Activated B cell treated with CpG ODN at 0.5 μM for 24 hours (primary cell): ENCODE measurements at regions of chr1 and their contacts with region 1.

Region 1: GRCh38 chr1:23403735-23404486 is 20.6 kb downstream of the TCEA3 start:
- DNase-seq: peak; percentile 71
- ATAC-seq: peak; percentile 95
- H3K4me3 Mint-ChIP-seq: no peak overlapping the region
- H3K27ac Mint-ChIP-seq: no peak overlapping the region
- H3K4me1 Mint-ChIP-seq: no peaks in the 10 kb centered on the region
- H3K27me3 Mint-ChIP-seq: peaks cover 7% of the 10 kb centered on the region
- CTCF ChIP-seq: peak; percentile 78

Region 2: GRCh38 chr1:22976461-22977243 is 427.3 kb before region 1 on chr1:
- CTCF ChIA-PET with region 1: no interaction called
- POLR2A ChIA-PET with region 1: no interaction called
- intact Hi-C with region 1: loop called (anchors 2 kb)
- DNase-seq: peak; percentile 23
- ATAC-seq: peak; percentile 94
- H3K4me3 Mint-ChIP-seq: no peak overlapping the region
- H3K27ac Mint-ChIP-seq: no peak overlapping the region
- H3K4me1 Mint-ChIP-seq: no peaks in the 10 kb centered on the region
- H3K27me3 Mint-ChIP-seq: peaks cover 25% of the 10 kb centered on the region
- CTCF ChIP-seq: no peak

Region 3: GRCh38 chr1:23216771-23217420 is 187.0 kb before region 1 on chr1:
- CTCF ChIA-PET with region 1: no interaction called
- POLR2A ChIA-PET with region 1: no interaction called
- intact Hi-C with region 1: loop called (anchors 1 kb)
- DNase-seq: peak; percentile 41
- ATAC-seq: peak; percentile 21
- H3K4me3 Mint-ChIP-seq: no peak overlapping the region
- H3K27ac Mint-ChIP-seq: no peak overlapping the region
- H3K4me1 Mint-ChIP-seq: peaks cover 6% of the 10 kb centered on the region
- H3K27me3 Mint-ChIP-seq: peaks cover 66% of the 10 kb centered on the region
- CTCF ChIP-seq: no peak

Region 4: GRCh38 chr1:23322770-23323169 is 81.1 kb before region 1 on chr1:
- CTCF ChIA-PET with region 1: no interaction called
- POLR2A ChIA-PET with region 1: no interaction called
- intact Hi-C with region 1: loop called (anchors 10 kb)
- DNase-seq: no peak
- ATAC-seq: no peak
- H3K4me3 Mint-ChIP-seq: no peak overlapping the region
- H3K27ac Mint-ChIP-seq: no peak overlapping the region
- H3K4me1 Mint-ChIP-seq: peaks cover 5% of the 10 kb centered on the region
- H3K27me3 Mint-ChIP-seq: no peaks in the 10 kb centered on the region
- CTCF ChIP-seq: no peak

Region 5: DNA sequence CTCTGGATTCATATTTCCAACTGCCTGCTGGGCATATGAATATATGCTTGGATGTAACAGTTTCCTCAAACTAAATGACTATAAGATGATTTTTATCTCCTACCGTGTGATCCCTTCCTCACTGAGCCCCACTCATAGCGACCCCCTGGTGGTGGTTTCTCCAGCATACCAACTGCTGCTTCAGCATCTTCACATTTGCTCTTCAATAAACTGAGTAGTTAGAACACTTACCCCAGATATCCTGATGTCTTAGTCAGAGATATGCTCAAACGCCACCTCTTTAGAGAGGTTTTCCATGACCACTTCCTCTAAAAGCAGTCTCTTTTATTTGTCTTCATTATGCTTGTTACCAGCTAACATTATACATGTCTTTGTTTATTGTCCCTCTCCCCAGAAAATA is 49.7 kb before region 1 on chr1:
- CTCF ChIA-PET with region 1: no interaction called
- POLR2A ChIA-PET with region 1: no interaction called
- intact Hi-C with region 1: no loop called
- DNase-seq: no peak
- ATAC-seq: no peak
- H3K4me3 Mint-ChIP-seq: no peak overlapping the region
- H3K27ac Mint-ChIP-seq: no peak overlapping the region
- H3K4me1 Mint-ChIP-seq: no peaks in the 10 kb centered on the region
- H3K27me3 Mint-ChIP-seq: no peaks in the 10 kb centered on the region
- CTCF ChIP-seq: no peak

Region 6: DNA sequence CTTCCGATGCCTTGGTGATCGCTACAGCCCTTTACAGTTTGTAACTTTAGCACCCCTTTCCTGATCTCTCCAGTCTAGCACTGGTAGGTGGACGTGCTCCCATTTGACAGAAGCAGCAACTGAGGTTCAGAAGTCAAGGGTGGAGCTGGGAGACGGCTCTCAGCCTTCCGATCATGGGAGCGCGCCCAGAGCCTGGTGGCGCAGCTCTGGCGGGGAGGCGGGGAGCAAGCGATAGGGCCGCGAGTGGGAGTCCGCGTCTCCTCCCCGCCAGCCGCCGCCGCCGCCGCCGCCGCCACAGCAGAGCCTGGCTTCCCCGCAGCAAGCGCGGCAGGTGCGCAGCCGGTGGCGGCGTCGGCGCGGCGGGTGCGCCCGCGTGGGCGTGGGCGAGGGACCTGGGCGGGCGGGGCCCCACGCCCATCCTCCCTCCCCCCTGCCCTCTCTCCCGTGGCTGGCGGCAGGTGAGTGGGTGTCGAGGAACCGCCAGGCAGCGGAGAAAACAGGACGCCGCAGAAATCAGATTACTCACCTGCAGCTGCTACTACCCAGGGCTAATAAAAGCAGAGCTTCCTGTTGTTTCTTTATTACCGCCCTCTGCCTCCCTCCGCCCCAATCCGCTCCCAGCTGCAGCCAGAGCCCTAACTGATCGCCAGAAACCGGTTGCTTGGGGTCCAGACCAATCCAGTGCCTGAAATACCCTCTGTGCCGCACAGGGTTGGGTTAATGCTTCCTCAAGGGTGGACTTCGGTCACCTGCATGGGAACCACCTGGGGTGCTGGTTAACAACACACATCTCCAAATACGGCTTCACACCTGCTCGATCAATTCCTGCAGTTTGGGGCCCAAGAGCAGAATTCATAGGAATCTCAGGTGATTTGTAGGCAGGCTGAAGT is 215.6 kb after region 1 on chr1:
- CTCF ChIA-PET with region 1: no interaction called
- POLR2A ChIA-PET with region 1: no interaction called
- intact Hi-C with region 1: no loop called
- DNase-seq: peak; percentile 75
- ATAC-seq: peak; percentile 81
- H3K4me3 Mint-ChIP-seq: peak overlapping the region; percentile 81
- H3K27ac Mint-ChIP-seq: peak overlapping the region; percentile 91
- H3K4me1 Mint-ChIP-seq: peaks cover 92% of the 10 kb centered on the region
- H3K27me3 Mint-ChIP-seq: no peaks in the 10 kb centered on the region
- CTCF ChIP-seq: no peak